ENCODE measurements at regions of chr16 and their contacts with region 1.

Region 1: DNA sequence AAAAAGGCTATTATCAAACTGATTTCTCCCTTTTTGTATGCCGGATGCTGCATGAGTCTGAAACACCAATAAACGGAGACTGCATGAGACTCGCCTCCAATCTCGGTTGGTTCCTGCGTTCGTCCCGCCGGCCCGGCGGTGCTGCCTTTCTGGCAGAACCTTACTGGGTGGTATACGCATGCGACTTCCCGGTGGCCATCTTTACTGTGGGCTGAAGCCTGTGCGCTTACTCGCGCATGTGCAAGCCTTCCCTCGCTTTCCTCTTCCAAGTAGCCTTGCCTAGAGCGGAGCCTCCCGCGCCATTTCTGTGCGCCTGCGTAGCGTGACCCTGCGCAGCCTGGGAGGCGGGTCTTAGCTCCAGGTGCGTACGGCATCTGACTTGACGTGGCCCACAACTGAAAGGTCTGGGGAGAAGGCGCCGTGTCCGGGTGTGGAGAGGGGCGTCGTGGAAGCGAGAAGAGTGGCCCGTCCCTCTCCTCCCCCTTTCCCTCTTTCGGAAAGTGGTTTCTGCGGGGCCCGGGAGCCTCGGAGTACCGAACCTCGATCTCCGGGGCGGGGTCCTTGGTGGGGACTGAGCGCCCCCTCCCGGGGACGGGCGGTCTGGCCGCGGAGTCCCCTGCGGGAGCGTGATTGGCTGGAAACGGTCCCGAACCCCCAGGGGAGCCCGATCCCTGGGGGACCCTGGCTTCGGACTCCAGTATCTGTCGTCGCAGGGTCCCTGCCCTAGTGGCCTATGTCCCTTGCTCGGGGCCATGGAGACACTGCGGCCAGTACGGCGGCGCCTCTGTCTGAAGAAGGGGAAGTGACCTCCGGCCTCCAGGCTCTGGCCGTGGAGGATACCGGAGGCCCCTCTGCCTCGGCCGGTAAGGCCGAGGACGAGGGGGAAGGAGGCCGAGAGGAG is at the start of gene PAGR1:
- DNase-seq: peak; percentile 98
- H3K4me3 Mint-ChIP-seq: peak within 1 kb of the TSS; percentile 89
- H3K27ac Mint-ChIP-seq: peak within 1 kb of the TSS; percentile 94
- H3K4me1 Mint-ChIP-seq: peaks cover 38% of the 10 kb centered on the region
- H3K27me3 Mint-ChIP-seq: no peaks in the 10 kb centered on the region
- CTCF ChIP-seq: peak; percentile 94
- total RNA-seq, gene PAGR1: 21.3 and 25.0 TPM in 2 replicates

Region 2: GRCh38 chr16:29675811-29676643 is 140.0 kb before region 1 on chr16:
- CTCF ChIA-PET with region 1: no interaction called
- POLR2A ChIA-PET with region 1: no interaction called
- intact Hi-C with region 1: no loop called
- DNase-seq: peak; percentile 11
- H3K4me3 Mint-ChIP-seq: no peak overlapping the region
- H3K27ac Mint-ChIP-seq: no peak overlapping the region
- H3K4me1 Mint-ChIP-seq: peaks cover 5% of the 10 kb centered on the region
- H3K27me3 Mint-ChIP-seq: peaks cover 9% of the 10 kb centered on the region
- CTCF ChIP-seq: no peak

Region 3: DNA sequence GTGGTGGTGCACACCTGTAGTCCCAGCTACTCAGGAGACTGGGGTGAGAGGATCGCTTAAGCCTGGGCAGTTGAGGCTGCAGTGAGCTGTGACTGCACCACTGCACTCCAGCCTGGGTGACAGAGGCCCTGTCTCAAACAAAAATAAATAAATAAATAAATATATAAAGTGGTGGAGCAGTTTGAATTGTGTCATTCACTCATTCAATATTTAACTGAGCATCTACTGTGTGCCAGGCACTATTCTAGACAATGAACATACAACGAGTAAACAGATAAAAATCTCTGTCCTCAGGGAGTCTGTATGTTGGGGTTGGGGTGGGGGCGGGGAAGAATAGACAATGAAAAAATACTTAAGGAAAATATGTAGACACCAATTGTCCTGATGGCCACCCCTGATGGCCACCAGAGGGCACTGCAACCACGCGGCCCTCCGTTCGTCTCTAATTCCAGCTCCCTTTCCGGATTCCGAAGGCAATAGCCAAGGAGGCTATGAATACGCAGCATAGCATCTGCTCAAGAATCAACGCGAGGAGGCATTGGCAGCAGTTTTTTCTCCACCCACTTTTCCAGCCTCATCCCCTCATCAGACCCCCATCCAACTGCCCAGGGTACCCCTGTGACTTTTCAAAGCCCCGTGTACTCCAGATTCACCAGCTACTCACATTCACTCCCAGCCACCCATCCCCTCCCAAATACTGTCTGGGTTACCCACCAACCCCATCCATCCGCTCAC is 115.6 kb before region 1 on chr16:
- CTCF ChIA-PET with region 1: interaction called, 5 read pairs
- POLR2A ChIA-PET with region 1: interaction called, 8 read pairs
- intact Hi-C with region 1: loop called (anchors 2 kb)
- DNase-seq: peak; percentile 87
- H3K4me3 Mint-ChIP-seq: no peak overlapping the region
- H3K27ac Mint-ChIP-seq: no peak overlapping the region
- H3K4me1 Mint-ChIP-seq: no peaks in the 10 kb centered on the region
- H3K27me3 Mint-ChIP-seq: peaks cover 22% of the 10 kb centered on the region
- CTCF ChIP-seq: peak; percentile 95

Region 4: DNA sequence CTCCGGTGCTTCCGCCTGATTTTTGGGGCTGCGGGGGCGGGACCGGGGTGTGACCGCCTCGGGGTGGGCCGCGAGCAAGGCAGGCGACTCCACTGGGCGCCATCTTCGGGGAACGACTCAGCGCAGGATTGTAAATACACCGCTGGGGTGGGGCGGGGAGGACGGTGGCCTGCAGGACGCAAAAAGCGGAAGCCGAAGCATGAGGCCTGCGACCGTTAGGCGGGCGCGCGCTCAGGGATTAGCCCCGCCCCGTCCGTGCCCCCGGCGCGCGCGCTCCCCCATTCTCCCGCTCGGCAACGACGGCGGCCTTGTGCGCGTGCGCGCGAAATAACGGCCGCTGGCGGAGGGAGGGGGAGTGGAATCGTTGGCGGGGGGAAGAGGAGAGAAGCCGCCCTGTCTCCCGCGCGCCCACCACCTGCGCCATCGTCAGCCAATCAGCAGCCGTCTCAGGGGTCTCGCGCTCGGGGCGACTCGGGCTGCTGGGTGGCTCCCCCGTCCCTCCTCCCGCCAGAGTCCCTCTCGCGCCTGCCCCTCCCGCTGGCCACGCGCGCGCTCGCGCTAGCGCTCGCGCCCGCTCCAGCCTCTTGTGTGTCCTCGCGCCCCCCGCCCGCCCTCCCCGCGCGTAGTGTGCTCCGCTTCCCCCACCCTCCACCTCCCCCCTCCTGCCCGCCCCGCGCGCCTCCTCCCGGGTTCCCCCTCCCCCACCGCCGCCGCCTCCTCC is 10.5 kb before region 1 on chr16:
- CTCF ChIA-PET with region 1: interaction called, 50 read pairs
- POLR2A ChIA-PET with region 1: interaction called, 120 read pairs
- intact Hi-C with region 1: no loop called
- DNase-seq: peak; percentile 95
- H3K4me3 Mint-ChIP-seq: peak overlapping the region; percentile 92
- H3K27ac Mint-ChIP-seq: peak overlapping the region; percentile 98
- H3K4me1 Mint-ChIP-seq: peaks cover 29% of the 10 kb centered on the region
- H3K27me3 Mint-ChIP-seq: no peaks in the 10 kb centered on the region
- CTCF ChIP-seq: no peak

Region 5: DNA sequence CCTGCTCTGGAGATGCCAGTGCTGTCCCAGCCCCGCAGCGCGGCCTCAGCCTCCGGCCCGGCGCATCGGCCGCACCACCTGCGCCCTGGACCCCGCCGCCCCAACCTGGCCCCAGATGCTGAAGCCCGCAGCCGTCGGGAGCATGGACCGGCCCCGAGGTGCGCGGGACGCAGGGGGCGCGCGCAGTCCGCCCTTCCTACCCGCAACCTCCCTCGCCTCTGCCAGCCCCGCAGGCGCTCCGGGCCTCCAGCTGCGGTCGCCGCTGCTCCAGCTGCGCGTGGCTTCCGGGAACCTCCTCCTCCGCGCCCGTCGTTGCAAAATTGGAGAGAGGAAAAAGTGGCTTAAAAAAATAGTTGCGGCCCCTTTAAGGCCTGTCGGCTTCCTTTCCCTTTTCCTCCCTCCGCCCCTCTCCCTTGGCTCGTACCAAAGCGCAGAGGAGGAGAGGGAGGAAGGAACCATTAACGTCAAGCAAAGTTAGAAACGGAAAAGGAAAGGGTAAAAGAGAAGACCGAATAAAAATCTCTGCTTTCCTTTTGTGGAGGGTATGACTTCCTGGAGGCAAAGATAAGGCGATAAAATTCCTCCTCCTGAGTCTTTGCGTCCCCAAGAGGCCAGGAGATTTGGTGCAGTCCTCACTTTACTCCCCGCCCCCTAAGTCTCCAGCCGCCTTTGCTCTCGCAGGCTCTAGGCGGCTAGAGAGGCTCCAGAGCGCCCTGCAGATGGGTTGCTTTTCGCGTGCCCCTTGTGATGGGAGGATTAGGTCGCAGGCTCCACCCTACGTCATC is 47.0 kb after region 1 on chr16 and contains the start of gene CDIPT:
- CTCF ChIA-PET with region 1: interaction called, 3 read pairs
- POLR2A ChIA-PET with region 1: interaction called, 23 read pairs
- intact Hi-C with region 1: loop called (anchors 5 kb)
- DNase-seq: peak; percentile 96
- H3K4me3 Mint-ChIP-seq: peak within 1 kb of the TSS; percentile 99
- H3K27ac Mint-ChIP-seq: peak within 1 kb of the TSS; percentile 99
- H3K4me1 Mint-ChIP-seq: peaks cover 14% of the 10 kb centered on the region
- H3K27me3 Mint-ChIP-seq: no peaks in the 10 kb centered on the region
- CTCF ChIP-seq: no peak
- total RNA-seq, gene CDIPT: 41.3 and 42.7 TPM in 2 replicates

Region 6: GRCh38 chr16:29961479-29962343 is 145.7 kb after region 1 on chr16 and contains the start of gene TMEM219:
- CTCF ChIA-PET with region 1: no interaction called
- POLR2A ChIA-PET with region 1: interaction called, 17 read pairs
- intact Hi-C with region 1: no loop called
- DNase-seq: peak; percentile 77
- H3K4me3 Mint-ChIP-seq: peak within 1 kb of the TSS; percentile 89
- H3K27ac Mint-ChIP-seq: peak within 1 kb of the TSS; percentile 77
- H3K4me1 Mint-ChIP-seq: peaks cover 16% of the 10 kb centered on the region
- H3K27me3 Mint-ChIP-seq: no peaks in the 10 kb centered on the region
- CTCF ChIP-seq: peak; percentile 14
- total RNA-seq, gene TMEM219: 62.1 and 68.1 TPM in 2 replicates

Region 7: GRCh38 chr16:30024451-30024850 is 208.4 kb after region 1 on chr16:
- CTCF ChIA-PET with region 1: interaction called, 8 read pairs
- POLR2A ChIA-PET with region 1: no interaction called
- intact Hi-C with region 1: loop called (anchors 5 kb)
- DNase-seq: no peak
- H3K4me3 Mint-ChIP-seq: no peak overlapping the region
- H3K27ac Mint-ChIP-seq: no peak overlapping the region
- H3K4me1 Mint-ChIP-seq: no peaks in the 10 kb centered on the region
- H3K27me3 Mint-ChIP-seq: peaks cover 41% of the 10 kb centered on the region
- CTCF ChIP-seq: no peak

Region 8: DNA sequence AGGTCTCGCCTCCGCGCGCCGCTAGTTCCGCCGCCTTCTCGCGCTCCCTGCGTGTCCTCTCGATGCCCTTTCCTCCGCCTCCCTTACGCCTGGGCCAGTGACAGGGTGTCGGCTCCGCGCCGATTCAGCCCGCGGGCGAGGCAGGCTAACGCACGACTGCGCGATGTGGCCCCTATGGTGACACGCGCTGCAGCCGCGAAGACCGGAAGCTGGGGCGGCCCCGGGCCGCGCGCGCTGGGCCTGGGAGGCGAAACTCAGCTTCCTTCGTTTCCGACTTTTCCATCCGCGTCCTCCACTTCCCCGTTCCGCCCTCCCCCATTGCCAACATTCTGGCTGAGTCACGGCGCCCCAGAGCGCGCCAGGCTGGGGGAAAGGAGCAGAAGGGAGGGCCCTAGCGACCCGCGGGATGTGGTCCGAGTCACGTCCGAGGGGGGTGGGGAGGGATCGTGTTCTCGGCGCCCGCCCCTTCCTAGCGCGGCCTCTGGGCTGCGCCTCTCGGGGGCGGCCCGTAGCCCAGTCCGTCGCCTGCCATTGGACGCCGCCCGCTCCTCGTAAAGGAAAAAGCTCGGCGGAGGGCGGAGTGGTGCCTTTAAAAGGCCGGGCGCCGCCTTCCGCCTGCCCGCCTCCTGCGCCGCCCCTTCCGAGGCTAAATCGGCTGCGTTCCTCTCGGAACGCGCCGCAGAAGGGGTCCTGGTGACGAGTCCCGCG is 249.3 kb after region 1 on chr16 and contains the start of gene ALDOA:
- CTCF ChIA-PET with region 1: no interaction called
- POLR2A ChIA-PET with region 1: interaction called, 14 read pairs
- intact Hi-C with region 1: no loop called
- DNase-seq: peak; percentile 99
- H3K4me3 Mint-ChIP-seq: peak within 1 kb of the TSS; percentile 97
- H3K27ac Mint-ChIP-seq: peak within 1 kb of the TSS; percentile 95
- H3K4me1 Mint-ChIP-seq: peaks cover 25% of the 10 kb centered on the region
- H3K27me3 Mint-ChIP-seq: no peaks in the 10 kb centered on the region
- CTCF ChIP-seq: no peak
- total RNA-seq, gene ALDOA: 1,141 and 1,165 TPM in 2 replicates

Region 9: DNA sequence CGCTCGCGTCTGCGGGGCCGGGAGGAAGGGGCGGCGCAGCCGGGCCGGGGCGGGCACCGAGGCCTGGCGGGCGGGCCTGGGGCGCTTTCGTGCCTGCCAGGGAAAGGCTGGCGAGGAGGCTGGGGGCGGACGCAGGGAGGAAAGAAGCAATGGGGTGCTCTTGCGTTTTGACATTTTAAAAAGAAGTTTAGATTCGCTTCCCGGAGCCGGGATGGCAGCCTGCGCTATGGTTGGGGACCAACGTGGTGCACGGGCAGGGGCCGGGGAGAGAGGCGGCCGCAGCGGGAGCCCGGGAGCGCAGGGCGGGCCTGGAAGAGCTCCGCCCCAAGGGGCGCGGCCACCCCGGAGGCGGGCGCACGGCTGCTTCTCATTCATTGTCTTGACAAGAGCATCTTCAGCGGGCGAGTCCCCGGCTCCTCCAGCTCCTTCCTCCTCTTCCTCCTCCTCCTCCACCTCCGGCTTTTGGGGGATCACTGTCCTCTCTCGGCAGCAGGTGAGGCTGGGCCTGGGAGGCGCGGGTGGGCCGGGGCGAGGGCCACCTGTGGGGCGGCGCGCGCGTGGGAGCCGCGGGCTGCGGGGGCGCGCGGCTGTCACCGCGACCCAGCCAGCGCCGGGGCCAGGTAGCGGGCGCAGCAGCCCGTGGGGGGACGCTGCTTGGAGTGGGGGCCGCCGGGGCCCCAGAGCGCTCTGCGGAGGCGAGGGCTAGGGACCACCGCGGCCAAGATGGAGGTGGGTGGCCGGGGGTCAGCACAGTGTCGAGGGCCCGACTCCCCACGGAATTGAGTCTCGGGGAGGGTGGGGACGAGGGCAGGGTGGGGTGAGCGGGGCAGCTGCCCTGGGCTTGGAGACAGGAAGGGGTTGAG is 367.4 kb after region 1 on chr16 and contains the start of gene CORO1A:
- CTCF ChIA-PET with region 1: no interaction called
- POLR2A ChIA-PET with region 1: no interaction called
- intact Hi-C with region 1: no loop called
- DNase-seq: peak; percentile 79
- H3K4me3 Mint-ChIP-seq: peak within 1 kb of the TSS; percentile 72
- H3K27ac Mint-ChIP-seq: peak within 1 kb of the TSS; percentile 19
- H3K4me1 Mint-ChIP-seq: peaks cover 4% of the 10 kb centered on the region
- H3K27me3 Mint-ChIP-seq: no peaks in the 10 kb centered on the region
- CTCF ChIP-seq: no peak
- total RNA-seq, gene CORO1A: 0.83 and 1.9 TPM in 2 replicates